CD4-positive, alpha-beta T cell (primary cell): ENCODE measurements at regions of chr15 and their contacts with region 1.

Region 1: GRCh38 chr15:91302588-91303439 is 202.8 kb downstream of the SV2B start:
- DNase-seq: peak in 5 of 14 experiments; percentile 30 to 76 (median 75)
- ATAC-seq: no peak
- H3K4me3 ChIP-seq: no peak overlapping the region
- H3K4me3 Mint-ChIP-seq: no peak overlapping the region
- H3K27ac ChIP-seq: no peak overlapping the region
- H3K27ac Mint-ChIP-seq: no peak overlapping the region
- H3K4me1 ChIP-seq: peaks cover 30% of the 10 kb centered on the region
- H3K4me1 Mint-ChIP-seq: peaks cover 31% of the 10 kb centered on the region
- H3K27me3 ChIP-seq: no peaks in the 10 kb centered on the region
- H3K27me3 Mint-ChIP-seq: peaks cover 26% of the 10 kb centered on the region
- CTCF ChIP-seq: peak; percentile 86

Region 2: DNA sequence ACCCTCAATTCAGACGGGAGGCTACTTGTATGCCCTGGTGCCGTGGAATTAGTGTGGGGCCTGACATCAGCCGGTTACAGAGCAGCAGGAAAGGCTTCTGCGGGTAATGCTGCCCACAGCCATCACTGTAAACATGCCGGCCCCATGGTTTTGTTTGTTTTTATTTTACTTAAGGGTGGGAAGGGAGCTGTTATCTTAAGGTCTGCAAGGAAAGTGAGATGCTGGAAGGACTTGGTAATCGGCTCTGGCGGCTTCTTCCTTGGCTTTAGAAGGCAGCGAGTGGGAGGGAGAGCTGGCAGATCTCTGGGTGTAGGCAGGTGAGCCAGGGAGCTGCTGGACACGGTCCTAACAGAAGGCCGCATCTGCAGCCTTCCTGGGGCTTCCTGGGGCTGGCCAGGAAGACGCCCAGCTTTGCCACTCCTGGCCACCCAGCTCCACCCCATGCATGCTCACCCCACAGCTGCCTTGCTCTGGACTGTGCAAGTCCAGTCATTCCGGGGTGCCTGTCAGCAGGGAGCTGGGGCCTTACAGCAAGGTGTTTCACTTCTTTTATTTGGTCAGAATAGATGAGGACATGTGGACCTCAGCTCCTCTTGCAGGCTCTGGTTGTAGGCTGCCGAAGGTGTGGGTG is 488.5 kb before region 1 on chr15:
- CTCF ChIA-PET with region 1: no interaction called
- POLR2A ChIA-PET with region 1: no interaction called
- intact Hi-C with region 1: no loop called
- DNase-seq: no peak
- ATAC-seq: no peak
- H3K4me3 ChIP-seq: no peak overlapping the region
- H3K4me3 Mint-ChIP-seq: no peak overlapping the region
- H3K27ac ChIP-seq: peak overlapping the region in 1 of 2 donors; percentile 15
- H3K27ac Mint-ChIP-seq: peak overlapping the region; percentile 67
- H3K4me1 ChIP-seq: peaks cover 54% of the 10 kb centered on the region
- H3K4me1 Mint-ChIP-seq: peaks cover 26% of the 10 kb centered on the region
- H3K27me3 ChIP-seq: no peaks in the 10 kb centered on the region
- H3K27me3 Mint-ChIP-seq: no peaks in the 10 kb centered on the region
- CTCF ChIP-seq: no peak

Region 3: GRCh38 chr15:91422704-91423254 is 120.0 kb after region 1 on chr15:
- CTCF ChIA-PET with region 1: no interaction called
- POLR2A ChIA-PET with region 1: no interaction called
- intact Hi-C with region 1: no loop called
- DNase-seq: peak in 4 of 14 experiments; percentile 11 to 75 (median 26)
- ATAC-seq: no peak
- H3K4me3 ChIP-seq: no peak overlapping the region
- H3K4me3 Mint-ChIP-seq: peak overlapping the region; percentile 39
- H3K27ac ChIP-seq: no peak overlapping the region
- H3K27ac Mint-ChIP-seq: peak overlapping the region; percentile 27
- H3K4me1 ChIP-seq: peaks cover 27% of the 10 kb centered on the region
- H3K4me1 Mint-ChIP-seq: peaks cover 33% of the 10 kb centered on the region
- H3K27me3 ChIP-seq: no peaks in the 10 kb centered on the region
- H3K27me3 Mint-ChIP-seq: peaks cover 5% of the 10 kb centered on the region
- CTCF ChIP-seq: no peak

Region 4: GRCh38 chr15:91522663-91523332 is 220.0 kb after region 1 on chr15:
- CTCF ChIA-PET with region 1: interaction called, 4 read pairs
- POLR2A ChIA-PET with region 1: no interaction called
- intact Hi-C with region 1: loop called (anchors 1 to 2 kb)
- DNase-seq: peak in 4 of 14 experiments; percentile 7 to 68 (median 66)
- ATAC-seq: no peak
- H3K4me3 ChIP-seq: no peak overlapping the region
- H3K4me3 Mint-ChIP-seq: no peak overlapping the region
- H3K27ac ChIP-seq: no peak overlapping the region
- H3K27ac Mint-ChIP-seq: no peak overlapping the region
- H3K4me1 ChIP-seq: peaks cover 8% of the 10 kb centered on the region
- H3K4me1 Mint-ChIP-seq: peaks cover 22% of the 10 kb centered on the region
- H3K27me3 ChIP-seq: no peaks in the 10 kb centered on the region
- H3K27me3 Mint-ChIP-seq: peaks cover 6% of the 10 kb centered on the region
- CTCF ChIP-seq: peak; percentile 18

Region 5: DNA sequence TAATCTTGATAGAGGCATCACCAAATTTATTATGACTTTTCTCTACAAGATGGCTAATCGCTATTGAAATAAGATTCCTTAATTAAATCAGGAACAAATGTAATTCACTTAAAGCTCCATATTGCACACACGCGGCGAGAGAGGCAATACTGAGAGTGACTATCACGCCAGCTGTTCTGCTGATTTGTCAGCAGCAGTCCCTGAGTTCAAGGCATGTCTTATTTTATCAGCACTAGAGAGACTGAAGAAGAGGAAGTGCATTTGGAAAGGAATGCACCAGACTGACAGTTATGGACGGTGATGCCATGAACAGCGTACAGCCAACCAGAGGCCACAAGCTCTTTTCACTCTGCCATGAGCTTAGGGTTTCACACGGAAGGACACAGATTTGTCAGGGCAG is 467.1 kb after region 1 on chr15:
- CTCF ChIA-PET with region 1: no interaction called
- POLR2A ChIA-PET with region 1: no interaction called
- intact Hi-C with region 1: loop called in 1 of 2 experiments (anchors 10 kb)
- DNase-seq: no peak
- ATAC-seq: no peak
- H3K4me3 ChIP-seq: no peak overlapping the region
- H3K4me3 Mint-ChIP-seq: no peak overlapping the region
- H3K27ac ChIP-seq: no peak overlapping the region
- H3K27ac Mint-ChIP-seq: no peak overlapping the region
- H3K4me1 ChIP-seq: no peaks in the 10 kb centered on the region
- H3K4me1 Mint-ChIP-seq: no peaks in the 10 kb centered on the region
- H3K27me3 ChIP-seq: peaks cover 0 to 6% of the 10 kb centered on the region in 2 experiments
- H3K27me3 Mint-ChIP-seq: peaks cover 30% of the 10 kb centered on the region
- CTCF ChIP-seq: no peak

Region 6: DNA sequence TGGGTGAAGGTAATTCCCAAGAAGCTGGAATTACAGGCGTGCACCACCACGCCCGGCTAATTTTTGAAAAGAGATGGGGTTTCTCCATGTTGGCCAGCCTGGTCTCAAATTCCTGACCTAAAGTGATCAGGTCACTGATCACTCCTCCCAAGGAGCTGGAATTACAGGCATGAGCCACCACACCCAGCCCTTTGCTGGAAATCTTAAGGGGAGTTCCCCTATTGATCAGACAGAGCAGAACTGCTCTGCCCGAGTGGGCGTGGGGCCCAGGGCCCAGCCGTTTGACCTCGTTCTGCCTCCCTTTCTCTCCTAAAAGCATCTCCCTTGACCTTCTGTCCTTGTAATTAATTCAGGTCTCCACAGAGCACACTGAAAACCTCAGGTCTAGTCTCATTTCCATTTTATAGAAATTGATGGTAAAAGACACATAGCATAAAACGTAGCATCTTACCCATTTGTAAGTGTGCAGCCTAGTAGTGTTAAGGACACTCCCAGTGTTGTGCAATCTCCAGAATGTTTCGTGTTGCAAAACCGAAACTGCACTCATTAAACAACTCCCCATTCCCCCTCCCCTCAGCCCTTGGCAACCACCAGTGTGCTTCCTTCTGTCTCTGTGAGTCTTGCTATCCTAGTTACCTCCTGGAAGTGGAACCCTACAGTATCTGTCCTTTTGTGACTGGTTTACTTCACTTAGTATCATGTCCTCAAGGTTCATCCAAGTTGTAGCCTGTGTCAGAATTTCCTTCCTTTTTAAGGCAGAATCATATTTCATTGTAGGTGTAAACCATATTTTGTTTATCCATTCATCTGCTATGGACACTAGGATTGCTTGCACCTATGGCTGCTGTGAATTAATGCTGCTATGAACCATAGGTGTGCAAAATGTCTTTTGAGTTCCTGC is 640.1 kb after region 1 on chr15:
- CTCF ChIA-PET with region 1: no interaction called
- POLR2A ChIA-PET with region 1: no interaction called
- intact Hi-C with region 1: loop called (anchors 2 to 5 kb)
- DNase-seq: peak in 11 of 14 experiments; percentile 5 to 82 (median 16)
- ATAC-seq: peak; percentile 87
- H3K4me3 ChIP-seq: no peak overlapping the region
- H3K4me3 Mint-ChIP-seq: no peak overlapping the region
- H3K27ac ChIP-seq: peak overlapping the region in 1 of 2 donors; percentile 38
- H3K27ac Mint-ChIP-seq: peak overlapping the region; percentile 14
- H3K4me1 ChIP-seq: peaks cover 66% of the 10 kb centered on the region
- H3K4me1 Mint-ChIP-seq: peaks cover 87% of the 10 kb centered on the region
- H3K27me3 ChIP-seq: no peaks in the 10 kb centered on the region
- H3K27me3 Mint-ChIP-seq: no peaks in the 10 kb centered on the region
- CTCF ChIP-seq: no peak

Region 7: GRCh38 chr15:92714477-92715401 is 1411.9 kb after region 1 on chr15:
- CTCF ChIA-PET with region 1: no interaction called
- POLR2A ChIA-PET with region 1: no interaction called
- intact Hi-C with region 1: loop called (anchors 2 to 10 kb)
- DNase-seq: peak; percentile 52 to 86 (median 66)
- ATAC-seq: peak; percentile 94
- H3K4me3 ChIP-seq: peak overlapping the region; percentile 56
- H3K4me3 Mint-ChIP-seq: peak overlapping the region; percentile 90
- H3K27ac ChIP-seq: no peak overlapping the region
- H3K27ac Mint-ChIP-seq: no peak overlapping the region
- H3K4me1 ChIP-seq: peaks cover 9% of the 10 kb centered on the region
- H3K4me1 Mint-ChIP-seq: peaks cover 6% of the 10 kb centered on the region
- H3K27me3 ChIP-seq: peaks cover 9 to 10% of the 10 kb centered on the region in 2 experiments
- H3K27me3 Mint-ChIP-seq: peaks cover 41% of the 10 kb centered on the region
- CTCF ChIP-seq: peak; percentile 91